ENCODE measurements at regions of chr11 and their contacts with region 1.

Region 1: DNA sequence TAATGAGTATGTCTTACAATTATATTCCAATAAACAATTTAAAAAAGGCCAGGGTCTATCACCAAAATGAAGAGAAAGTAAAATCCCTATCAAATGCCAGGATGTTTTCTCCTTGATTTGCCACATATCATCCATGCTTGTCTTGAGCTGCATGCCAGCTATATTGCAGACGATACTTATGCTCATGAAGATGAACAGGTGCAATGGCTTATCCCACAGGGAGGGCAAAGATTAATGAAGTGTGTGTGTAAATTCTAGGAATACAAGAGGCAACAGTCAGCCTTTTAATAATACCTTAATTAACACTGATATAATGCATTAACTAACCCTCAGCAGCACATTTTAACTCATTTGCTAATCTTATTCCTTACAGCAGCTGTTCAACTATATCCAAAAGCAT is 850.5 kb downstream of the KCNA4 start:
- DNase-seq: no peak
- H3K4me3 ChIP-seq: no peak overlapping the region
- H3K27ac ChIP-seq: no peak overlapping the region
- H3K4me1 ChIP-seq: no peaks in the 10 kb centered on the region
- H3K27me3 ChIP-seq: no peaks in the 10 kb centered on the region
- CTCF ChIP-seq: no peak
- POLR2A ChIP-seq: no peak

Region 2: DNA sequence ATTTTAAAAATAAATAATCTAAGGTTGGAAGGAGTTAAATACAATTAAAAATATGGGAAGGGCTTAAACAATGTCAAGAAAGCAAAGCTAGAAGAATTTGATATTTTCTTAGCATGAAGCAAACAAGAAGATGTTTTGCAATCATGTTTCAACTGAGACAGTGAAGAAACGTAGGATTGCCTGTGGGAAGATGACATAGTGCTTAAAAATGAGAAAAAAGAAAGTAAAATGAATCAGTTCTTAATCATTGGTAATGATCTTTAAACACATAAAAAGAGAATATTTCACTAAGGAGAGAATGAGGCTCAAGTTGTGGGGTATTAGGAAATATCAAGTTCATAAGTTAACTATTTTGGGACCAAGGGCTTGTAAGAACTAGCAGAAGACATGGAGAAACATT is 203.1 kb before region 1 on chr11:
- intact Hi-C with region 1: loop called (anchors 5 kb)
- DNase-seq: no peak
- H3K4me3 ChIP-seq: no peak overlapping the region
- H3K27ac ChIP-seq: no peak overlapping the region
- H3K4me1 ChIP-seq: no peaks in the 10 kb centered on the region
- H3K27me3 ChIP-seq: no peaks in the 10 kb centered on the region
- CTCF ChIP-seq: no peak
- POLR2A ChIP-seq: no peak

Measured in spleen (tissue), 13 donors.